AG04449 (cell line): ENCODE measurements at regions of chr5 and their contacts with region 1.

Region 1: DNA sequence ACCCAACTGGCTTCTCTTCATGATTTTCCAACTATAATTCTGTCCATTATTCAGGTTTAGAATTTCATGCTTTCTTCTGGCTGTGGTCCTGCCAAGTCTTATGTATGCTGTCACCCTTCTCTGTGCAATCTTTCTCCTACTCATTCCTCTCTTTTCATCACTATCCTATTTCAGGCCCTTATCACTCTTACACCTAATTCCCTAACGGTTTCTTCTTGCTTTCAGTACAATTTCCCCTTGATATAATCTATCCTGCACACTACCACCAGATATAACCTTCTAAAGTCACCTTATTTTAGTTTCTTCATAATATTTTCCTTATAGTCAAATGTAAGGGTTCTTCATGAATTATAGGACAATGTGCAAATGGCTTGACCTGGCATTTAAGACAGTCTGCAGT is 436.2 kb downstream of the RAB3C start:
- DNase-seq: no peak
- H3K4me3 ChIP-seq: no peak overlapping the region
- CTCF ChIP-seq: no peak

Region 2: GRCh38 chr5:59039296-59040023 is 20.4 kb after region 1 on chr5:
- CTCF ChIA-PET with region 1: interaction called, 11 read pairs
- POLR2A ChIA-PET with region 1: no interaction called
- DNase-seq: no peak
- H3K4me3 ChIP-seq: peak overlapping the region; percentile 81
- CTCF ChIP-seq: no peak

Region 3: DNA sequence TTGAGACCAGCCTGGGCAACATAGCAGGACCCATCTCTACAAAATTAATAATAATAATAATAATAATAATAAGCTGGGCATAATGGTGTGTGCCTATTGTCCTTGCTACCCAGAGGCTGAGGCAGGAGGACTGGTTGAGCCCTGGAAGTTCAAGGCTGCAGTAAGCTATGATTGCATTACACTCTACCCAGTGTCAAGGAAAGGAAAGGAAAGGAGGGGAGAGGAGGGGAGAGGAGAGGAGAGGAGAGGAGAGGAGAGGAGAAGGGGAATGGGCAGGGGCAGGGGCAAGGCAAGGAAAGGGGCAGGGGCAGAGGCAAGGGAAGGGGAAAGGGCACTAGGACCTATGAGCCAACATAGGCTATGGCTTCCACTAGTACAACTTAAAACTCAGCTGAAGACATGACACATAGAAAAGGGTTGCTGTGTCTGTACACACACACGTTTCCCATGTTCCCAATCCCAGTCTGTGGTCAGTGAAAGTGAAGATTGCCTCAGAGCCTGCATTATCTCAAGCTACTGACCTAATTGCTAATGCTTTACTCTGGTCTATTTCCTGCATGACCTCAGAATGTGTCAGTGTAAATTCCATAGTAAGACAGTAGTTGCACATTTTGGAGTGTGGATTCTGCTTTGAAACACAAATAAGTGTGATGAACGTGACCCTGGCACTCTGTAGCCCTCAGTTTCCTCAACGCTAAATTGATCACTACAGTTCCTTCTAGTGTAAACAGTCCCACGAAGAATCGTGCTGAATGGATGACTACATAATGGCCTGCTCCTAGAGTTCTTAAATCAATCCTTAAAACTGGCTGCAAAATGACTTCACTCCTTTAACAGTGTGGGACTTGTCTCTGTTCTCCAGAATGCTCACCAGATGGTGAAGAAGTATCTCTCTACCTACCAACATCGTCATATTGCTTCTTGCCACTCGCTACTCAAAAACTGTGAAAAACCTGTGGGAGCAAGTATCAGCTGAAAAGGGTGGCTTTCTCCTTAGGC is 60.8 kb after region 1 on chr5:
- CTCF ChIA-PET with region 1: no interaction called
- POLR2A ChIA-PET with region 1: no interaction called
- DNase-seq: peak; percentile 96
- H3K4me3 ChIP-seq: no peak overlapping the region
- CTCF ChIP-seq: no peak